Left ventricle myocardium superior (tissue), 1 donor: ENCODE measurements at regions of chr5 and their contacts with region 1.

Region 1: GRCh38 chr5:141701360-141702119 is 19.5 kb upstream of the ARAP3 start:
- DNase-seq: no peak
- ATAC-seq: peak; percentile 14

Region 2: GRCh38 chr5:141512390-141512910 is 189.1 kb before region 1 on chr5:
- intact Hi-C with region 1: no loop called
- DNase-seq: peak; percentile 89
- ATAC-seq: peak; percentile 16

Region 3: GRCh38 chr5:141762790-141763368 is 61.3 kb after region 1 on chr5:
- intact Hi-C with region 1: loop called (anchors 10 kb)
- DNase-seq: no peak
- ATAC-seq: peak; percentile 62

Region 4: DNA sequence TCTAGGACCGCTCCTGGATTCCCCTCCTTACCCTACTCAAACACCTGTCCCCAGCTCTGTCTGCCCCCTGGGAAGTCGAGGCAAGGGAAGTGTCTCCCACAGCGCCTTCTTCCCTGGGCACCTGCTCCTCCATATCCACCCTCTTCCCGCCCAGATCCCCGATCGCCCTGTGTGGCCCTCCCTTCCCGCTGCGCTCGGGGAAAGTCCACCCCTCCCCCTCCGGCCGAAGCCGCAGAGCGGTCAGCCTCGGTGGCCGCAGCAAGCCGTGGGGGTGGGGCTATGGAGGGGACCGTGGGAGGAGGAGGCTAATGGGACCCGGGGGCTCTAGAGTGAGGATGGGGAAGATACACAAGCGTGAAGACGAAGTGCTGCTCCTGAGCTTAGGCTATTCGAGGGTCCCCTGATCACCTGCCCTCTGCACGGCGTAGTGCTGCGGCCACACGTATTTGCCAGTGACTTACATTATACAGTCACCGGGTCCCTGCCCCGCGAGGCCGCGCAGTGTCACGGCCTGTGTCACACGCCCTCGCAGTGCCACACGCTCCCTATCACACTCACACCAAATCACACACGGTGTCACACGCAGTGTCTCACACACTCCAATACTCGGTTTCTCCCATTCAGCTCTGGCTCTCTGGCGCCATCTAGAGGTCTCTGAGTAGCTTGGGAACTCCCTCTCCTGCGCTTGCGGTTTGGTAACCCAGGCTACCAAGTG is 177.3 kb after region 1 on chr5:
- intact Hi-C with region 1: loop called (anchors 2 kb)
- DNase-seq: peak; percentile 84
- ATAC-seq: peak; percentile 86